Mucosa of descending colon (tissue), 3 donors: ENCODE measurements at regions of chr3 and their contacts with region 1.

Region 1: GRCh38 chr3:117526470-117527079 is 817.0 kb downstream of the TUSC7 start:
- DNase-seq: peak in 1 of 3 donors; percentile 72
- ATAC-seq: no peak
- H3K4me3 ChIP-seq: no peak overlapping the region
- H3K4me1 ChIP-seq: no peaks in the 10 kb centered on the region
- CTCF ChIP-seq: peak; percentile 36

Region 2: GRCh38 chr3:116770815-116771450 is 755.6 kb before region 1 on chr3:
- intact Hi-C with region 1: loop called in 1 of 2 experiments (anchors 10 kb)
- DNase-seq: peak in 2 of 3 donors; percentile 54 to 82
- ATAC-seq: peak; percentile 85
- H3K4me3 ChIP-seq: no peak overlapping the region
- H3K4me1 ChIP-seq: no peaks in the 10 kb centered on the region
- CTCF ChIP-seq: peak; percentile 44

Region 3: DNA sequence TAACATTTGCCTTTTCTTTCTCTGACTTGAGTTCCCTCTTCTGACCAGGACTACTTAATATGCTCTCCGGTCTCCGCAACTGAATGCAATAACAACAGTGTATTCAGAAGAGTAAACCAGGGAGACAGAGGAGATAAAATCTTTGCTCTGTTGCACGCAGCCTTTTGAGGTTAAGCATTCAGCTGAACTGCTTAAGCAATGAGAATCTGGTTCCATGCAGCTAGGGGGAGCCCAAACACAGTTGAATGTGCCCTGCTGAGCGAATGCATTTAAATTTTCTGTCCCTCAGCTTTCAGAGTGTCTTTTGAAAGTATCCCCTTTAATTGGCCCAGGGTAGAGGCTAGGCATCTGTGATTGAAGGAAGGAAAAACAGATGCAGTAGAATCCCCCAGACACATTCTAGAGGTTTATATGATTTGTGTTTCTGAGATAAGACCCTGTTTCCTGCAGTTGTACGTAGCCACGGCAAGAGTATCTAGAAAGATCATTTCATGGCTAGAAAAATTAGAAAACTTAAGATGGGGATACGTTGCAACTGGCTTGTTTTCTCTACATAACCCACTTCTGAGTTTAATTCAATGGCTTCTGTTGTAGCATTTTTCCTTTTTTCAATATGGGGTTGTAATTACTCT is 507.4 kb before region 1 on chr3:
- intact Hi-C with region 1: loop called in 1 of 2 experiments (anchors 10 kb)
- DNase-seq: peak in 2 of 3 donors; percentile 33 to 78
- ATAC-seq: peak; percentile 76
- H3K4me3 ChIP-seq: no peak overlapping the region
- H3K4me1 ChIP-seq: no peaks in the 10 kb centered on the region
- CTCF ChIP-seq: peak; percentile 50

Region 4: GRCh38 chr3:117407317-117407716 is 119.3 kb before region 1 on chr3:
- intact Hi-C with region 1: loop called in 1 of 2 experiments (anchors 10 kb)
- DNase-seq: peak in 1 of 3 donors; percentile 40
- ATAC-seq: peak; percentile 57
- H3K4me3 ChIP-seq: no peak overlapping the region
- H3K4me1 ChIP-seq: no peaks in the 10 kb centered on the region
- CTCF ChIP-seq: no peak

Region 5: GRCh38 chr3:117587416-117587815 is 60.8 kb after region 1 on chr3:
- intact Hi-C with region 1: no loop called
- DNase-seq: no peak
- ATAC-seq: no peak
- H3K4me3 ChIP-seq: no peak overlapping the region
- H3K4me1 ChIP-seq: no peaks in the 10 kb centered on the region
- CTCF ChIP-seq: no peak

Region 6: DNA sequence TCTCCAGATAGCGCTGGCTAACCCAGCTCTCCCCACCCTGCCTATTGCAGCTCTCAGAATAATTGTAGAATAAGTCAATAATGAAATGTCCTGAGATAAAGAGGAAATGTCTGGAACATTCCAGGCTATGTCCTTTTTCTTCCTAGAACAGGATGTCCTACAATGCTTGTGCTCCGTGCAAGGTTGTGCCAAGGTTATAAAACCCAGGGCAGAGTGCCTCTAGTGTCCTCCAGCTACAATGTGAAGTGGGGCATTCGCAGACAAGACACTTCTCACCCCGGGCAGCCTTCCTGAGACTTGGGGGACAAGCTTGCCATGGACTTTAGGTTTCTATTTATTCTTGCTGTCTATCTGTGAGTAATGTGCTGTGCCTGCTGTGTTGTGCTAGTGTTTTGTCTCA is 83.6 kb after region 1 on chr3:
- intact Hi-C with region 1: no loop called
- DNase-seq: no peak
- ATAC-seq: no peak
- H3K4me3 ChIP-seq: no peak overlapping the region
- H3K4me1 ChIP-seq: no peaks in the 10 kb centered on the region
- CTCF ChIP-seq: no peak

Region 7: DNA sequence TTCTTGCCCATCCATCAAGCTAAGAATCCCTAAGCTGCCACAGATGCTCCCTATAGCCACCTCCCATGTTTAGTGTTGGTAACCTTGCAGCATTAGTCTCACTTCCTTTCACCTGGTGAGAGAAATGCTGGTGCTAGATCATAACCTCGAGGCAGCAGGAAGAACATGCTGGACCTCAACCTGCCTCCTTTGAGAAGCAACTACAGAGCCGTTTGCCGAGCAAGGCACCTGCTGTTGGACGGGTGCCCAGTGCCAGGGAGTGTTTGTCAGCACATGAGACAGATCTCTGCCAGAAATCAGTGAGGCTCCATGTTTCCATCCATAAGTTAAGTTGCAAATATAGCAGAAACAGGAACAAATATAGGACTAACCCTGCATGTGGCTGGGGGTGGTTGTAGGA is 138.7 kb after region 1 on chr3:
- intact Hi-C with region 1: no loop called
- DNase-seq: peak; percentile 31 to 53 (median 43)
- ATAC-seq: no peak
- H3K4me3 ChIP-seq: no peak overlapping the region
- H3K4me1 ChIP-seq: no peaks in the 10 kb centered on the region
- CTCF ChIP-seq: no peak

Region 8: GRCh38 chr3:117681619-117682018 is 155.0 kb after region 1 on chr3:
- intact Hi-C with region 1: no loop called
- DNase-seq: no peak
- ATAC-seq: no peak
- H3K4me3 ChIP-seq: no peak overlapping the region
- H3K4me1 ChIP-seq: no peaks in the 10 kb centered on the region
- CTCF ChIP-seq: no peak